Activated CD8-positive, alpha-beta T cell treated with anti-CD3 and anti-CD28 coated beads, Interleukin-2, amount 10 ng/mL, durations not matched to agents 7 days and 5 days (primary cell): ENCODE measurements at regions of chr12 and their contacts with region 1.

Region 1: GRCh38 chr12:2682296-2683251 is 112.2 kb upstream of the FKBP4 start:
- DNase-seq: peak; percentile 74
- ATAC-seq: peak; percentile 75
- H3K4me3 Mint-ChIP-seq: peak overlapping the region; percentile 55
- H3K27ac Mint-ChIP-seq: peak overlapping the region; percentile 87
- H3K4me1 Mint-ChIP-seq: peaks cover 6% of the 10 kb centered on the region
- H3K27me3 Mint-ChIP-seq: no peaks in the 10 kb centered on the region

Region 2: DNA sequence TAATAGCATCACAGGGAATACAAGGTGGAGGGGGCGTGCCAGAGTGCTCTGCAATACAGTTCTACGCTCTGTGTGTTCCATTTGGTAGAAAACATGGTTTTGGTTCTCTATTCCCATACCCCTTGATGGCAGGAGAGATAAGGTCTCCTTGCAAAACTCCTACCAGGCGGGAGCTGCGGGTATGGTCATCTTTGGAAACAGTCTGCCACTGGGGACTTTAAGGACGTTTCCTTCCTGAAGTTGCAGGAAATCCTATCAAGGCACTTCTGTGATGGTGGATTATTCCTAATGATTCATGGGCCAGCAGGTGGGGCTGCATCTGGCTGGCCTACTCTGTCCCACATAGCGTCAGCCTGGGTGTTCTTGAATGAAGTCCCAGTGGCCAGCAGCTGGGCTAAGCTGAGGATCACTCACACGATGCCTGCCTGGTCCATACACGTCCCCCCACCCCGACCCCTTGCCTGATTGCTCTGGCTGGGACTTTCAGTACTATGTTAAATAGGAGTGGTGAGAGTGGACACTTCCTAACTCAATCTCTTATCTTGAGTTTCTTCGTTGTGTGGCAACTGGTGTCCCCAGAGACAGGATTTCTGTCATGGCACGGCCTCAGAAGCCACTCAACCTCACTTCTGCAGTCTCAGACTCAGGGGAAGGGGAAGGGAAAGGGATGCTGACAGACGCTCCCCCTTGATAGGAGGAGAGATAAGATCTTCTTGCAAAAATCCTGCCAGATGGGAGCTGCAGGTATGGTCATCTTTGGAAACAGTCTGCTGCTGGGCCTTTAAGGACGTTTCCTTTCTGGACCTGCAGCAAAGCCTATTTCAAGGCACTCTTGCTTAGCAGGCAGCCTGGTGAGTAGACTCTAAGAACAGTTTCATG is 51.1 kb after region 1 on chr12:
- CTCF ChIA-PET with region 1: interaction called, 10 read pairs
- POLR2A ChIA-PET with region 1: no interaction called
- DNase-seq: no peak
- ATAC-seq: no peak
- H3K4me3 Mint-ChIP-seq: no peak overlapping the region
- H3K27ac Mint-ChIP-seq: no peak overlapping the region
- H3K4me1 Mint-ChIP-seq: peaks cover 17% of the 10 kb centered on the region
- H3K27me3 Mint-ChIP-seq: peaks cover 27% of the 10 kb centered on the region

Region 3: GRCh38 chr12:2783936-2784600 is 101.5 kb after region 1 on chr12:
- CTCF ChIA-PET with region 1: interaction called, 103 read pairs
- POLR2A ChIA-PET with region 1: no interaction called
- DNase-seq: peak; percentile 56
- ATAC-seq: peak; percentile 96
- H3K4me3 Mint-ChIP-seq: peak overlapping the region; percentile 48
- H3K27ac Mint-ChIP-seq: no peak overlapping the region
- H3K4me1 Mint-ChIP-seq: peaks cover 10% of the 10 kb centered on the region
- H3K27me3 Mint-ChIP-seq: peaks cover 30% of the 10 kb centered on the region

Region 4: GRCh38 chr12:2801050-2801783 is 118.6 kb after region 1 on chr12:
- CTCF ChIA-PET with region 1: interaction called, 10 read pairs
- POLR2A ChIA-PET with region 1: no interaction called
- DNase-seq: no peak
- ATAC-seq: no peak
- H3K4me3 Mint-ChIP-seq: no peak overlapping the region
- H3K27ac Mint-ChIP-seq: no peak overlapping the region
- H3K4me1 Mint-ChIP-seq: peaks cover 15% of the 10 kb centered on the region
- H3K27me3 Mint-ChIP-seq: no peaks in the 10 kb centered on the region